ENCODE measurements at regions of chr19 and their contacts with region 1.

Region 1: GRCh38 chr19:17496337-17496997 is 15.0 kb upstream of the PGLS start:
- DNase-seq: peak; percentile 86
- H3K4me3 Mint-ChIP-seq: peak overlapping the region; percentile 27
- H3K27ac Mint-ChIP-seq: no peak overlapping the region
- H3K4me1 Mint-ChIP-seq: peaks cover 30% of the 10 kb centered on the region
- H3K27me3 Mint-ChIP-seq: no peaks in the 10 kb centered on the region

Region 2: GRCh38 chr19:17346109-17346671 is 150.3 kb before region 1 on chr19:
- CTCF ChIA-PET with region 1: no interaction called
- POLR2A ChIA-PET with region 1: no interaction called
- DNase-seq: peak; percentile 80
- H3K4me3 Mint-ChIP-seq: no peak overlapping the region
- H3K27ac Mint-ChIP-seq: no peak overlapping the region
- H3K4me1 Mint-ChIP-seq: peaks cover 14% of the 10 kb centered on the region
- H3K27me3 Mint-ChIP-seq: peaks cover 22% of the 10 kb centered on the region

Region 3: GRCh38 chr19:17482877-17483604 is 13.4 kb before region 1 on chr19:
- CTCF ChIA-PET with region 1: interaction called, 20 read pairs
- POLR2A ChIA-PET with region 1: no interaction called
- DNase-seq: no peak
- H3K4me3 Mint-ChIP-seq: no peak overlapping the region
- H3K27ac Mint-ChIP-seq: no peak overlapping the region
- H3K4me1 Mint-ChIP-seq: no peaks in the 10 kb centered on the region
- H3K27me3 Mint-ChIP-seq: no peaks in the 10 kb centered on the region

Region 4: GRCh38 chr19:17511724-17512573 is 15.5 kb after region 1 on chr19:
- CTCF ChIA-PET with region 1: interaction called, 16 read pairs
- POLR2A ChIA-PET with region 1: no interaction called
- DNase-seq: peak; percentile 83
- H3K4me3 Mint-ChIP-seq: peak overlapping the region; percentile 91
- H3K27ac Mint-ChIP-seq: peak overlapping the region; percentile 92
- H3K4me1 Mint-ChIP-seq: peaks cover 41% of the 10 kb centered on the region
- H3K27me3 Mint-ChIP-seq: no peaks in the 10 kb centered on the region

Region 5: GRCh38 chr19:17530586-17530985 is 34.1 kb after region 1 on chr19:
- CTCF ChIA-PET with region 1: interaction called, 11 read pairs
- POLR2A ChIA-PET with region 1: no interaction called
- DNase-seq: no peak
- H3K4me3 Mint-ChIP-seq: no peak overlapping the region
- H3K27ac Mint-ChIP-seq: no peak overlapping the region
- H3K4me1 Mint-ChIP-seq: peaks cover 9% of the 10 kb centered on the region
- H3K27me3 Mint-ChIP-seq: no peaks in the 10 kb centered on the region

Measured in activated CD4-positive, alpha-beta T cell treated with anti-CD3 and anti-CD28 coated beads, Interleukin-2, amount 10 ng/mL, durations not matched to agents 7 days and 5 days (primary cell).